Dendritic cell treated with granulocyte-macrophage colony-stimulating factor and Interleukin-4, amounts not matched to agents 40 ng/mL and 50 ng/mL, for 4 days (primary cell): ENCODE measurements at regions of chr20 and their contacts with region 1.

Region 1: DNA sequence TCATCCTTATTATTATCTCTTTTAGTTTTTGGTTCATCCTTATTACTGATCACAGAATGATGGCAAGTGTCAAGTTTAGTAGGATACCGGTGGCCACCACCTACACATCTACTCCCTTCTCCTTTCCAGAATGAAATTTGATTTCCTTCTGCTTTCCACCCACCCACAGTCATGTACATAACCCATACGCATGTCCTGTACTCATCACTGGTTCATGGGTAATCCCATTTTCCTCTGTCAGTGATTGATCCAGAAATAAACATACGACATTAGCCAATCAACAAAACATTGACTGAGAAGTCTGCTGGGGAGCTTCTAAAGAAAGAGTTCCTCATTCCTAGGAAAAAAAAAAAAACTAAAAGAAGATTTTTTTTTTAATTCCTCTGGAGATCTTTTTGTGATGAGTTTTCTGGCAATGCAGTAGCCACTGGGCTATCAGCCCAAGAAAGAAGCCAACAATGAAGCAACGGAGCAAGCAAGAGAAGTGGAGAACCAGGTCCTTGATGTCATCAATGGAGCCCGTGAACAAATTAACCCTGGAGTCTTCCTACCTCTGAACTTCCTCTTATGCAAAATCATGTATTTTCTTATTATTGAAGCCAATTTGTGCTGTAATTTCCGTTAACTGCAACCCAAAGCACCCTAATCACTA is 127.8 kb downstream of the TASP1 start:
- H3K4me3 Mint-ChIP-seq: no peak overlapping the region
- H3K27ac Mint-ChIP-seq: peak overlapping the region; percentile 64
- H3K4me1 Mint-ChIP-seq: peaks cover 24% of the 10 kb centered on the region
- H3K27me3 Mint-ChIP-seq: no peaks in the 10 kb centered on the region

Region 2: DNA sequence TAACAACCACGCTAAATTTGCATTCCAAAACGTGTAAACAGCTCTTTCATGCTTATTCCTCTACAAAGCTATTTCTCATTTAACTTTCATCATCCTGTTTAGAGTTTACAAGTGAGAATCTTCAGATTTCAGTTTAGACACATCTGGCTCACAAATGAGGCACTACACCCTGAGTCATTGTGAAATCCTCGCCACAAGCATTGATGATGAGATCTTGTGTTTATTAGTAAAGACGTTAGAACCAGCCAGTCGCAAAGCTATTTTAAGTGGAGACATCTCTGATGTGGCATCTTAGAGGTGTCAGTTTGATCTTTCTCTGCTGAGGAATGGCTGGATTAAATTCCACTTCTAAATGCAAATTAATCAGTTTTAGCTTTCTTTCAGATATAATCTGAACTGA is 298.2 kb before region 1 on chr20:
- intact Hi-C with region 1: no loop called
- H3K4me3 Mint-ChIP-seq: no peak overlapping the region
- H3K27ac Mint-ChIP-seq: no peak overlapping the region
- H3K4me1 Mint-ChIP-seq: no peaks in the 10 kb centered on the region
- H3K27me3 Mint-ChIP-seq: peaks cover 18% of the 10 kb centered on the region

Region 3: DNA sequence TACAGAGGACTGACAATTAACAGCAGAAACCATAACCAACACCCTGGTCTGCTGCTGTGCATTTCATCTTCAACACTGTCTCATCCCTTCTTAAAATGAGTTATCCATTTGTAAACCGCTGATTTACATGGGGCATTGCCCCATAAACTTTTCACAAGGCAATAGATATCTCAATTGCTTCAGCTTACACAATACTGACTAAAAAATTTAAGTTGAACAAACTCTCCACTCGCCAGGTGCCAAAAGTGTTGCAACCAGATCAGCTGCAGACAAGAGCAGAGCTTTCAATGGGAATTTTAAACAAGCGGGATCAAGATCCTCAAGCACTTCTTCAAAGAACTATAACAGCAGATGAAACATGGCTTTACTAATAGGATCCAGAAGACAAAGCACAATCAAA is 55.2 kb before region 1 on chr20:
- intact Hi-C with region 1: no loop called
- H3K4me3 Mint-ChIP-seq: no peak overlapping the region
- H3K27ac Mint-ChIP-seq: no peak overlapping the region
- H3K4me1 Mint-ChIP-seq: no peaks in the 10 kb centered on the region
- H3K27me3 Mint-ChIP-seq: no peaks in the 10 kb centered on the region

Region 4: GRCh38 chr20:13468166-13468565 is 42.8 kb before region 1 on chr20:
- intact Hi-C with region 1: loop called (anchors 1 kb)
- H3K4me3 Mint-ChIP-seq: no peak overlapping the region
- H3K27ac Mint-ChIP-seq: no peak overlapping the region
- H3K4me1 Mint-ChIP-seq: no peaks in the 10 kb centered on the region
- H3K27me3 Mint-ChIP-seq: no peaks in the 10 kb centered on the region